AG04449 (cell line): ENCODE measurements at regions of chr17 and their contacts with region 1.

Region 1: DNA sequence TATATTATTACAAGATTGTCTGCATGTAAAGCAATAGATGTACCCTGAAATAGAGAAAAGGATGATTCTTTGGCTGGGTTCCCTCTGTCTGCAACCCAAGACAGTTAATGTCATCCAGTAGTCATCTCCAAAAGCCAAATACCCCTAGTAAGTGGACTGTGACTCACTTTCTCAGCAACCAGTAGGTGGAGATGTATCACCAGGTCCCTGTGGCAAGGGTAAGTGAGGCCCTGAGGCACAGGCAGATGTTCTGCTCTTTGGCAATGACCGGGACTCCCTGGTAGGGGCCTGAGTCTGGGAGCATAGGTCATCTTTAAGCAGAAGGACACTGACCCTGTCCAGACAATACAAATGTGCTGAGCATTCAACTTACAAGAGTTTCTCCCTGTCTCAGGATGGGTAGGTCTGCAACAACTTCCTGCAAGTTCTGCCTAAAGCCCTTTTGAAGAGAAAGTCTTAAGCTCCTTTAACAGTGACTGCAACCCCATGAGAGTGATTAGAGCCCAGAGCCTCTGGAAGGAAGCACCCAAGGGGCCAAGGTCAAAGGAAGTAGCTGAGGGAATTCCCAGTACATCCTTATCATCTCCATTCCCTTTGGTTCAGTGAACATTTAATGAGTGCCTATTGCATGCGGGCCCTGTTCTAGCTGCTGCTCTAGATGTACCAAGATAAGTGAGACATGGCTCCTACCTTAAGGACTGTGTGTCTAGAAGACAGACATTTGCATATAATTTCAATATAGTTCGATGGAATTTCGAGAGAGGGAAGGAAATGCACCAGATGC is 31.9 kb downstream of the PMP22 start:
- DNase-seq: peak; percentile 31
- H3K4me3 ChIP-seq: no peak overlapping the region
- CTCF ChIP-seq: peak; percentile 54

Region 2: DNA sequence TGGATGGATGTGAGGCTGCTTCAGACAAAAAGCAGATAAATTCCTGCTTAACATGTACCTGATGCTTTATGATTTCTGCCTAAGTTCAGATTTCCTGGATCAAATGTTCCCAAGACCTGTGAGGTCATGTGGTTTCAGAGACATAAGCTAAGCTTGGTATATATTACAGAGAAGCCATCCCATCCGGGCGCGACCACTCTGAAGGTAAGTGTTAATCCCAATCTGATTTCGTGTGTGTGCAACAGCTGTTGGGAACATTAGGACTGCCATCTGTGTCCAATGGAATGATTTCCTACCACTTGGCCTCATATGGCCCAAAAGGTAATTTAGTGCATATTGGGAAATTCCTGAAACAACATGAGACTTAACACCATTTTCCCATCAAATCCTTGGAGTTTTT is 733.2 kb before region 1 on chr17:
- CTCF ChIA-PET with region 1: no interaction called
- POLR2A ChIA-PET with region 1: no interaction called
- DNase-seq: no peak
- H3K4me3 ChIP-seq: no peak overlapping the region
- CTCF ChIP-seq: no peak

Region 3: GRCh38 chr17:15247891-15248529 is 14.8 kb after region 1 on chr17:
- CTCF ChIA-PET with region 1: interaction called, 11 read pairs
- POLR2A ChIA-PET with region 1: no interaction called
- DNase-seq: no peak
- H3K4me3 ChIP-seq: no peak overlapping the region
- CTCF ChIP-seq: peak; percentile 17